Brain microvascular endothelial cell (primary cell): ENCODE measurements at regions of chr1 and their contacts with region 1.

Region 1: GRCh38 chr1:201511941-201512539 is 5.1 kb upstream of the CSRP1 start:
- DNase-seq: no peak
- H3K4me3 ChIP-seq: no peak overlapping the region
- H3K27ac ChIP-seq: no peak overlapping the region
- H3K27me3 ChIP-seq: no peaks in the 10 kb centered on the region
- CTCF ChIP-seq: no peak

Region 2: GRCh38 chr1:201348211-201348566 is 163.9 kb before region 1 on chr1:
- in situ Hi-C with region 1: no loop called
- DNase-seq: peak; percentile 45
- H3K4me3 ChIP-seq: no peak overlapping the region
- H3K27ac ChIP-seq: no peak overlapping the region
- H3K27me3 ChIP-seq: peaks cover 13% of the 10 kb centered on the region
- CTCF ChIP-seq: peak; percentile 85

Region 3: GRCh38 chr1:201436393-201436792 is 75.6 kb before region 1 on chr1:
- in situ Hi-C with region 1: loop called (anchors 10 kb)
- DNase-seq: no peak
- H3K4me3 ChIP-seq: no peak overlapping the region
- H3K27ac ChIP-seq: no peak overlapping the region
- H3K27me3 ChIP-seq: no peaks in the 10 kb centered on the region
- CTCF ChIP-seq: peak; percentile 52